Spleen (tissue), 13 donors: ENCODE measurements at regions of chr15 and their contacts with region 1.

Region 1: GRCh38 chr15:55649054-55649423 is 60.9 kb upstream of the PYGO1 start:
- DNase-seq: no peak
- H3K4me3 ChIP-seq: no peak overlapping the region
- H3K27ac ChIP-seq: no peak overlapping the region
- H3K4me1 ChIP-seq: no peaks in the 10 kb centered on the region
- H3K27me3 ChIP-seq: no peaks in the 10 kb centered on the region
- CTCF ChIP-seq: no peak
- POLR2A ChIP-seq: no peak

Region 2: GRCh38 chr15:55601374-55601773 is 47.7 kb before region 1 on chr15:
- intact Hi-C with region 1: no loop called
- DNase-seq: no peak
- H3K4me3 ChIP-seq: no peak overlapping the region
- H3K27ac ChIP-seq: no peak overlapping the region
- H3K4me1 ChIP-seq: no peaks in the 10 kb centered on the region
- H3K27me3 ChIP-seq: peaks cover 0 to 8% (median 0%) of the 10 kb centered on the region in 7 donors
- CTCF ChIP-seq: no peak
- POLR2A ChIP-seq: no peak

Region 3: DNA sequence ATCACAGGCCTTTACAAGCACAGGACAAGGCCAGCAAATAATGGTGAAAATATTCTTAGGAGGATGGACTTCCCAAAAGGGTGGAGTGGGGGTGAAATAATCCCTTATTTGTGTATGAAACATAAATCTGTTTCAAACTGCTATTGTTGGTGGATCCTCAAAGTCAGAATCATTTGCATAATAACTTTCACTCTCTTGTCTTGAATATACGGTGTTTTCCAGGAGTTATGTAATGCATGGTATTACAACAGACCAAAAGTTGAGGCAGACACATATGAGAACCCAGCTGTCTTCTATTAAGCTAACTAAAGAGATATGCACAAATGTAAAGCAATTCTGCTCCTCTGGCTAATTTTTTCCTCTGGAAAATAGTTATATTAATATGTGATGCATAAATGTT is 36.2 kb after region 1 on chr15:
- intact Hi-C with region 1: no loop called
- DNase-seq: no peak
- H3K4me3 ChIP-seq: no peak overlapping the region
- H3K27ac ChIP-seq: no peak overlapping the region
- H3K4me1 ChIP-seq: peaks cover 0 to 4% (median 0%) of the 10 kb centered on the region in 6 donors
- H3K27me3 ChIP-seq: no peaks in the 10 kb centered on the region
- CTCF ChIP-seq: no peak
- POLR2A ChIP-seq: no peak

Region 4: DNA sequence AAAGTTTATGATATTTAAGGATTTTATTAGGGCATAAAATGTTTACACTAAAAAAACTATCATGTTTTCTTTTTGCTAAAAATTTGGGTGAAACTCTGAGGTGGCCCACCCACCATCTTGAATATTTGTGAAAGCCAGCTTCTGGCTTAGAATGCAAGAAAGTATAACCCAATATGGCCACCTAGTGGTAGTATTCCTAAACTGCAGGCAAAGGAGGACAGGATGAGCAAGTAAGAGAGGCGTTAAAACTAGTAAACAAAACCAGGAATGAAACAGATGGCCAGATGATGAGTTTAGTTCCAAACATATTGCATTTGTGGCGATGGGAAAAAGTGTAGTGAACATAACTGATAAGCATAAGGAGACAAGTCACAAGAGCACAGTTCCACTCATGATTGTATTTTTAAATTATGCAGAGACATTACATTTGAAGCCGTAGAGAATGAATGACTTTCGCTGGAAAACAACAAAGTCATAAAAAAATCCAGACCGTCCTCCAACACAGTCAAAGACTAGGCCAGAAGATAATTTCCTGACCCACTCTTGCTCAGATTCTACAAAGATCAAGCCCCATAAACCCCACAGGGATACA is 197.2 kb after region 1 on chr15:
- intact Hi-C with region 1: loop called (anchors 10 kb)
- DNase-seq: no peak
- H3K4me3 ChIP-seq: no peak overlapping the region
- H3K27ac ChIP-seq: no peak overlapping the region
- H3K4me1 ChIP-seq: no peaks in the 10 kb centered on the region
- H3K27me3 ChIP-seq: no peaks in the 10 kb centered on the region
- CTCF ChIP-seq: peak; percentile 62 to 90 (median 86)
- POLR2A ChIP-seq: no peak

Region 5: DNA sequence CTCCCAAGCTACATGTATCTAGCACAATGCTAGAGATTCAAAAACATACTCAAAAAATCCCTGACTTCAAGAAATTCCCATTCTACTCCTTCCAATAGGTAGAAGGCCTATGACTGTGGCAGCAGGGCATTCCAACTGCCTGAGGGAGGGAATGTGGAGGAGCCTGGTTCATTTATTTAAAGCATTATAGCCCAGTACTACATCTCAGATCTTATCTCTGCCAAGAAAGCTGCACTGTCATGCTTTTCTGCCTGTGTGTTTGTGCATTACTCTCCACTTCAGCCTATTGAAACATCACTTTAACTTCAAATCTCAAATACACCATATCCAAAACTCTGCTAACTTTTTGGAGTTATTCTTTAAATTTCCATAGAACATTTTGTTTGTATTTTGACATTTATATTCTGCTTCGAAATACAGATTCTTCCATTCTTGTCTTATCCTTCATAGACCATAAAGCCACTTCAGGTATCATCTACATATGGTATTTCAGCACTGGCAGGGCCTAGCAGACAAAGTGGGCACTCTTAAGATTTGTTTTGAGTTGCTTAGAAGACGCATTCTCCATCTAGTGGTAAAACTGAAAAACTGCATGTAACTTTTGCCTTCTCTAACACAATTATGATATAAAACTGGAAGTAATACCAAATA is 403.5 kb after region 1 on chr15:
- intact Hi-C with region 1: loop called (anchors 5 kb)
- DNase-seq: no peak
- H3K4me3 ChIP-seq: no peak overlapping the region
- H3K27ac ChIP-seq: no peak overlapping the region
- H3K4me1 ChIP-seq: no peaks in the 10 kb centered on the region
- H3K27me3 ChIP-seq: no peaks in the 10 kb centered on the region
- CTCF ChIP-seq: peak; percentile 27 to 72 (median 64)
- POLR2A ChIP-seq: no peak

Region 6: GRCh38 chr15:56428821-56429458 is 779.9 kb after region 1 on chr15:
- intact Hi-C with region 1: loop called (anchors 10 kb)
- DNase-seq: no peak
- H3K4me3 ChIP-seq: no peak overlapping the region
- H3K27ac ChIP-seq: no peak overlapping the region
- H3K4me1 ChIP-seq: no peaks in the 10 kb centered on the region
- H3K27me3 ChIP-seq: no peaks in the 10 kb centered on the region
- CTCF ChIP-seq: peak in 8 of 11 experiments; percentile 22 to 49 (median 40)
- POLR2A ChIP-seq: no peak